ENCODE measurements at regions of chr10 and their contacts with region 1.

Region 1: GRCh38 chr10:80144067-80144695 is 11.7 kb downstream of the PLAC9 start:
- DNase-seq: no peak
- ATAC-seq: peak; percentile 40 to 79 (median 50)
- H3K4me3 ChIP-seq: peak overlapping the region in 5 of 10 donors; percentile 11 to 33 (median 26)
- H3K27ac ChIP-seq: peak overlapping the region in 3 of 10 donors; percentile 27 to 44 (median 33)
- H3K4me1 ChIP-seq: peaks cover 4 to 38% (median 24%) of the 10 kb centered on the region in 9 donors
- H3K27me3 ChIP-seq: no peaks in the 10 kb centered on the region
- CTCF ChIP-seq: no peak

Region 2: GRCh38 chr10:79542626-79543025 is 601.6 kb before region 1 on chr10:
- intact Hi-C with region 1: loop called in 1 of 10 experiments (anchors 5 kb)
- DNase-seq: no peak
- ATAC-seq: peak in 2 of 8 donors; percentile 50 to 55
- H3K4me3 ChIP-seq: no peak overlapping the region
- H3K27ac ChIP-seq: no peak overlapping the region
- H3K4me1 ChIP-seq: peaks cover 0 to 8% (median 0%) of the 10 kb centered on the region in 9 donors
- H3K27me3 ChIP-seq: no peaks in the 10 kb centered on the region
- CTCF ChIP-seq: no peak

Region 3: GRCh38 chr10:80055760-80056159 is 88.4 kb before region 1 on chr10:
- intact Hi-C with region 1: loop called in 1 of 10 experiments (anchors 5 kb)
- DNase-seq: peak in 1 of 2 donors; percentile 30
- ATAC-seq: peak in 6 of 8 donors; percentile 27 to 76 (median 60)
- H3K4me3 ChIP-seq: no peak overlapping the region
- H3K27ac ChIP-seq: no peak overlapping the region
- H3K4me1 ChIP-seq: no peaks in the 10 kb centered on the region
- H3K27me3 ChIP-seq: no peaks in the 10 kb centered on the region
- CTCF ChIP-seq: no peak

Region 4: GRCh38 chr10:80078448-80079311 is 65.5 kb before region 1 on chr10 and contains the start of gene TMEM254:
- intact Hi-C with region 1: loop called in 2 of 10 experiments (anchors 5 to 10 kb)
- DNase-seq: peak; percentile 93 to 95
- ATAC-seq: peak; percentile 97 to 99 (median 98)
- H3K4me3 ChIP-seq: peak within 1 kb of the TSS; percentile 64 to 96 (median 79)
- H3K27ac ChIP-seq: peak within 1 kb of the TSS; percentile 90 to 100 (median 96)
- H3K4me1 ChIP-seq: peaks cover 2 to 19% (median 16%) of the 10 kb centered on the region in 9 donors
- H3K27me3 ChIP-seq: no peaks in the 10 kb centered on the region
- CTCF ChIP-seq: peak in 1 of 9 donors; percentile 6
- total RNA-seq, gene TMEM254: 5.5 to 10.7 (median 8.3) TPM

Region 5: GRCh38 chr10:80205478-80206276 is 61.5 kb after region 1 on chr10 and contains the start of gene ANXA11:
- intact Hi-C with region 1: loop called in 6 of 10 experiments (anchors 5 to 10 kb)
- DNase-seq: peak; percentile 83 to 88
- ATAC-seq: peak; percentile 73 to 88 (median 80)
- H3K4me3 ChIP-seq: peak within 1 kb of the TSS; percentile 64 to 96 (median 82)
- H3K27ac ChIP-seq: peak within 1 kb of the TSS; percentile 97 to 100 (median 99)
- H3K4me1 ChIP-seq: peaks cover 13 to 66% (median 53%) of the 10 kb centered on the region in 9 donors
- H3K27me3 ChIP-seq: no peaks in the 10 kb centered on the region
- CTCF ChIP-seq: no peak
- total RNA-seq, gene ANXA11: 338 to 558 (median 422) TPM

Region 6: GRCh38 chr10:80509403-80510161 is 365.4 kb after region 1 on chr10:
- intact Hi-C with region 1: loop called in 1 of 10 experiments (anchors 5 kb)
- DNase-seq: peak in 1 of 2 donors; percentile 73
- ATAC-seq: peak; percentile 53 to 86 (median 76)
- H3K4me3 ChIP-seq: peak overlapping the region in 1 of 10 donors; percentile 19
- H3K27ac ChIP-seq: peak overlapping the region; percentile 63 to 87 (median 76)
- H3K4me1 ChIP-seq: peaks cover 20 to 76% (median 67%) of the 10 kb centered on the region in 9 donors
- H3K27me3 ChIP-seq: no peaks in the 10 kb centered on the region
- CTCF ChIP-seq: no peak

Measured in heart right ventricle (tissue), 16 donors.